Tibial artery (tissue), 4 donors: ENCODE measurements at regions of chr2 and their contacts with region 1.

Region 1: GRCh38 chr2:27304488-27305240 is 3.6 kb downstream of the UCN start:
- DNase-seq: no peak
- H3K4me3 ChIP-seq: no peak overlapping the region
- H3K27ac ChIP-seq: no peak overlapping the region
- H3K4me1 ChIP-seq: peaks cover 0 to 26% (median 21%) of the 10 kb centered on the region in 4 donors
- H3K27me3 ChIP-seq: peaks cover 10 to 51% of the 10 kb centered on the region in 2 donors
- CTCF ChIP-seq: no peak

Region 2: GRCh38 chr2:27202854-27203253 is 101.8 kb before region 1 on chr2:
- intact Hi-C with region 1: loop called (anchors 1 kb)
- DNase-seq: no peak
- H3K4me3 ChIP-seq: no peak overlapping the region
- H3K27ac ChIP-seq: no peak overlapping the region
- H3K4me1 ChIP-seq: no peaks in the 10 kb centered on the region
- H3K27me3 ChIP-seq: no peaks in the 10 kb centered on the region
- CTCF ChIP-seq: no peak